ENCODE measurements at regions of chr19 and their contacts with region 1.

Region 1: DNA sequence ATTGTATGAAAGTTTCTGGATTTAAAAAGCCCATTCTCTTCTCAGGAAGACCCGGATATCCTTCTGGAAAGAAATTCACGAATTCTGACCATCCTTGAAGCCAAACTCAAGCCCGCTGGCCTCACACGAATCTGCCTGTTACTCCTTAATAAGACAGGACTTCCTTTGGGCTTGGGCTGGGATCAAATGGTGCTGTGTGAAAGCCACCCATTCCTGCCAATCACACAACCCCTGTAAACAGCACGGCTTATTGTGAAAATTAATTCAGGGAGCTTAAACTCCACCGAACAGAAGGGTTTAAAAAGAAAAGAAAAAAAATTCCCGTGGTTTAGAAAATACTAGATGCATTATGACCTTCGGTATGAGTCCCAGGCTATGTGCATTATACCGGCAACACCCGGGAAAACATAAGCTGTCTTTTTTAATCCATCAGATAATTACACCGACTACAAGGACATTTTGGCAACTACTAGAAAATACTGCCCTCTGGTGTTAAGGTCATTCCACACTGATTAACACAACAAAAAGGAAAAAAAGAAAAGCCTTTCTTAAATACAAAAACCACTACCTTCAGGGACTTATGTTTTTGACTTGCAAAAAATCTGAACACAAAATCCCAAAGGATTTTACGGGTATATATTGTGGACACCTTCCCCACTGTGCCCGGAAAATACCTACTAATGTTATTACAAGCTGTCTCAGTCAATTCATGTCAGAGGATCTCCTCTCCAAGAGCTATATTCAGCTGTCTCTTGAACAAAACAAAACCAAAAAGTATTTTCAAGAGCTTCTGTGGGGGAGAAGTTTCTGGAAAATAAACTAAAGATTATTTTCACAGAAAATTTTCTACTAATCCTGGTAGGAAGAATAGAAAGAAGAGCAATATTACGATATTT is 76.0 kb upstream of the LSM14A start:
- DNase-seq: no peak
- H3K4me3 ChIP-seq: no peak overlapping the region
- CTCF ChIP-seq: peak; percentile 24

Region 2: DNA sequence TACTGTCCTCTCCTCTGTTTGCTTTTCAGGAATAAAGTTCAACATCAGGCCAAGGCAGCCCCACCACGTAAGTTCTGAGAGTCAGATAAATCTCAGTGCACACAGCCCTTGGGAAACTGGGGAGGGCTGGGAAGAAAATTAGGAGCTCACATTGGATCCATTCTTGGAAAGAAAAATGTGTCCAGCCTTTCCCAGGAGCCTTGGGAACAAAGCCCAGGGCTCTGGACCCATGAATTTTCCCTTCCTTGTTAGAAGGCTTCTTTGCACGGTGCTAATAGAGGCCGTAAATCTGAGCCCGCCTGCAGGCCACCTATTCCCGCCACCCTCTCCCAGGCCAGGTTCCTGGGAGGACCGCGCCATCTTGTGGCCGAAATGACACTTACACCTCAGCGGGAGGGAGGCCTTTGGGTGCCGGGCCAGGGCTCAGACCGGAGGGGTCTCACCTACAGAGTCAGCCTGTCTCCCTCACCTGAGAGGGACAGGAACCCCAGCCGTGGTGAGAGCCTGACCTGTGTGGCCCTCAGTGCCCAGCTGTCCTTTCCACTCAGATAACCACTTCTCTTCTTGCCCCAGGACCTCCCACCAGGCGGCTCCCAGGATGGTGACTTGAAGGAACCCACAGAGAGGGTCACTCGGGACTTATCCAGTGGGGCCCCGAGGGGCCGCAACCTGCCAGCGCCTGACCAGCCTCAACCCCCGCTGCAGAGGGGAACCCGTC is 324.7 kb before region 1 on chr19:
- CTCF ChIA-PET with region 1: interaction called, 223 read pairs
- POLR2A ChIA-PET with region 1: no interaction called
- DNase-seq: no peak
- H3K4me3 ChIP-seq: no peak overlapping the region
- CTCF ChIP-seq: peak; percentile 91

Region 3: GRCh38 chr19:33795370-33796163 is 300.7 kb before region 1 on chr19:
- CTCF ChIA-PET with region 1: interaction called, 14 read pairs
- POLR2A ChIA-PET with region 1: no interaction called
- DNase-seq: no peak
- H3K4me3 ChIP-seq: peak overlapping the region; percentile 74
- CTCF ChIP-seq: peak; percentile 68

Region 4: DNA sequence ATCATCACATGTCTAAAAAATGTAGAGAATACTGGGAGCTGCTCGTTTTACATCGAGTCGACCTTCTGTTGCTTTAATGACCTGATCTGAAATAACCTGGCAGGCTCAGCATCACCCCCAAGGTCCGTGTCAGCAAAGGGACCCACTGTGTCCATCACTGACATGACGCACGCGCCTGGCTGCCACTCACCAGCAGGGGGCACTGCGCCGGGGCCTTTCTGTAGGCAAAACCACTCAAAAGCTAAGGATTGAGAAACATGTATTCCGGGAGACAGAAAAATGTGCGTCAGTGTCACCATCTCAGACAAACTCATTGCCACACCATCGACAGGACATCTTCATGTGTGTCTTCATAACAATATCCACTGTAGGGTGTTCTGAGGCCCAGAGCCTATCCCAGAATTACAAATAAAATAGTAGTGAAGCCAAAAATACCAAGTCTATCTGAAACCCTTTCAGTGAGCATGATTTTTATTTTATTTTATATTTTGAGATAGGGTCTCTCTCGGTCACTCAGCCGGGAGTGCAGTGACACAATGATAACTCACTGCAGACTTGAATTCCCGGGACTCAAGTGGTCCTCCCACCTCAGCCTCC is 54.2 kb before region 1 on chr19:
- CTCF ChIA-PET with region 1: interaction called, 48 read pairs
- POLR2A ChIA-PET with region 1: no interaction called
- DNase-seq: no peak
- H3K4me3 ChIP-seq: no peak overlapping the region
- CTCF ChIP-seq: peak; percentile 84

Region 5: GRCh38 chr19:34082289-34083077 is 13.8 kb before region 1 on chr19:
- CTCF ChIA-PET with region 1: interaction called, 23 read pairs
- POLR2A ChIA-PET with region 1: no interaction called
- DNase-seq: peak; percentile 12
- H3K4me3 ChIP-seq: no peak overlapping the region
- CTCF ChIP-seq: no peak

Region 6: DNA sequence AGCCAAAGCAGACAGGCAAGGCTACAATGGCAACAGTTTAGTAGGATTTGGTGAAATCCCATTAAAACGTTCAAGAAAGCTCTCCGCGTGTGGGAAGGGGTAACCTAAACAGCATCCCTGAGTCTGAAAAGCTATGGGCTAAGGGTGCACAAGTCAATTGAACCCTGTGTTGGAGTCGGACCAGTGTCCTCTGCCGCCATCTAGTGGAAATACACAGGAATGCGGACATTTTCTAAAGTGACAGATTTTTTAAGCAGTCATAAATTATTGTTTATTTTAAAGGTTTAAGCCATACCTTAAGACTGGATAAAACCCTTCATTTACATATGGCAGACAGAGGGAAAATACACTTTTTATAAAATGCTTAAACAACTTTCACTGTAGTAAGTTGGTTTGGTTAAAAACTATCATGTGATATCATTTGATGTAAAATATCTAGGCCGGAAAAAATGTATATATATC is 49.5 kb after region 1 on chr19:
- CTCF ChIA-PET with region 1: interaction called, 12 read pairs
- POLR2A ChIA-PET with region 1: no interaction called
- DNase-seq: no peak
- H3K4me3 ChIP-seq: no peak overlapping the region
- CTCF ChIP-seq: peak; percentile 64

Region 7: GRCh38 chr19:34171877-34172660 is 75.8 kb after region 1 on chr19 and contains the start of gene LSM14A:
- CTCF ChIA-PET with region 1: no interaction called
- POLR2A ChIA-PET with region 1: no interaction called
- DNase-seq: no peak
- H3K4me3 ChIP-seq: peak within 1 kb of the TSS; percentile 92
- CTCF ChIP-seq: no peak